Endothelial cell of umbilical vein (primary cell): ENCODE measurements at regions of chr2 and their contacts with region 1.

Region 1: GRCh38 chr2:60826111-60826510 is 55.3 kb upstream of the REL start:
- DNase-seq: no peak
- H3K4me3 ChIP-seq: no peak overlapping the region
- H3K27ac ChIP-seq: no peak overlapping the region
- H3K4me1 ChIP-seq: no peaks in the 10 kb centered on the region
- H3K27me3 ChIP-seq: peaks cover 4 to 11% of the 10 kb centered on the region in 2 experiments
- CTCF ChIP-seq: no peak
- POLR2A ChIP-seq: no peak

Region 2: DNA sequence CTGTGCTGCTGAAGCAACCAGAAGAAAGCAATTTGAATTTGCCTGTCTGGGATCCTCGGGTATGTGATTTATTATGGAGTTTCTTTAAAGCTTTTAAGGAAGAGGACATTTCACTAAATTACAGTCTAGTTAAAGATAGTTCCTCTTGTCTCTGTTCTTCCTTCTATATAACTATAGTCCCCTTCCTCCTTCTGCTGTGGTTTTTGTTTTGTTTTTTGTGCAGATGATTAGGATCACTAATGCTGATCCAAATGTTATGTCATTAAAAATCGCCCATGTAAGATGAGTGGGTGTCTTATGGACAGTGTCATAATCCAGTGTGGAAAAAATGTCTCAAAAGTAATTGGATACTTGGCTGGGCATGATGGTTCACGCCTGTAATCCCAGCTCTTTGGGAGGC is 45.4 kb before region 1 on chr2:
- CTCF ChIA-PET with region 1: no interaction called
- POLR2A ChIA-PET with region 1: no interaction called
- dilution Hi-C with region 1: no loop called
- intact Hi-C with region 1: loop called (anchors 1 kb)
- DNase-seq: no peak
- H3K4me3 ChIP-seq: no peak overlapping the region
- H3K27ac ChIP-seq: no peak overlapping the region
- H3K4me1 ChIP-seq: no peaks in the 10 kb centered on the region
- H3K27me3 ChIP-seq: no peaks in the 10 kb centered on the region
- CTCF ChIP-seq: no peak
- POLR2A ChIP-seq: no peak

Region 3: GRCh38 chr2:60839126-60839813 is 13.2 kb after region 1 on chr2:
- CTCF ChIA-PET with region 1: interaction called, 11 read pairs
- POLR2A ChIA-PET with region 1: no interaction called
- dilution Hi-C with region 1: no loop called
- intact Hi-C with region 1: no loop called
- DNase-seq: no peak
- H3K4me3 ChIP-seq: no peak overlapping the region
- H3K27ac ChIP-seq: no peak overlapping the region
- H3K4me1 ChIP-seq: no peaks in the 10 kb centered on the region
- H3K27me3 ChIP-seq: peaks cover 11 to 21% of the 10 kb centered on the region in 2 experiments
- CTCF ChIP-seq: no peak
- POLR2A ChIP-seq: no peak